Kidney (tissue), 22 donors: ENCODE measurements at regions of chr3 and their contacts with region 1.

Region 1: DNA sequence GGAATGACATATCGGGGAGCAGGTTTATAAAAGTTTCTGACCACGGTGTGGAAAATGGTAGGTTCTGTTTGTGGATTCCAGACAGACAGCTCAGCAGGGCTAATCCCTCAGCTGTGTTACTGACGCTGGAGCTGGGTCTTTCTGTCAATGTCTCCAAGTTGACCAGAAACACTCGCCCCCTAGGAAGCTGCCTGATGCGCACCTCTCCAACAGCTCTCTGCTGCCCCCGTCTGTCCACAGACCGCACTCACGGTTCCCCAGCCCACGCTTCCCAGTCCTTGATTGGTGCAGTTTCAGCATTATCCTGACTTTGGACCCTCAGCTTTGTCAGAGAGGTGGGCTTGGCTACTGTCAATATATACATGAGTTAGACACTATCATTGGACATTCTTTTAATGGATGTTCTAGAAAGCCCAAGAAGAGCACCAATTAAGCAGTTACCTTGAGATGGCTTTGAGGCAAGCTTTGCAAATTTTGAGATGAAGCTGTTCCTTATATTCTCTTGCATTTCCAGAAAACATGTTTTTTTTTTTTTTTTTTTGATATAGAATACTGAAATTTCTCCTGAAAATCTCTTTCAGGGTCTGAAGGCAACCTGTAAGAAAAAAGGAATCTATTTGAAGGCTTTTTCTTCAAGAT is 98.9 kb upstream of the TBC1D5 start:
- DNase-seq: peak; percentile 80 to 84 (median 83)
- H3K4me3 ChIP-seq: no peak overlapping the region
- H3K27ac ChIP-seq: no peak overlapping the region
- H3K4me1 ChIP-seq: no peaks in the 10 kb centered on the region
- H3K27me3 ChIP-seq: no peaks in the 10 kb centered on the region
- CTCF ChIP-seq: peak; percentile 95

Region 2: GRCh38 chr3:17431004-17431403 is 410.3 kb before region 1 on chr3:
- intact Hi-C with region 1: loop called (anchors 10 kb)
- DNase-seq: peak in 2 of 5 donors; percentile 19 to 36
- H3K4me3 ChIP-seq: no peak overlapping the region
- H3K27ac ChIP-seq: no peak overlapping the region
- H3K4me1 ChIP-seq: peaks cover 0 to 7% (median 0%) of the 10 kb centered on the region in 3 donors
- H3K27me3 ChIP-seq: no peaks in the 10 kb centered on the region
- CTCF ChIP-seq: no peak